ENCODE measurements at regions of chr5 and their contacts with region 1.

Region 1: GRCh38 chr5:154445422-154446182 is at the start of gene SAP30L:
- DNase-seq: peak; percentile 89 to 97 (median 94)
- H3K4me3 ChIP-seq: peak within 1 kb of the TSS; percentile 69 to 99 (median 92)
- H3K27ac ChIP-seq: peak within 1 kb of the TSS in 53 of 59 donors; percentile 13 to 92 (median 72)
- H3K27me3 ChIP-seq: no peaks in the 10 kb centered on the region
- CTCF ChIP-seq: peak in 6 of 56 donors; percentile 2 to 31 (median 16)
- total RNA-seq, gene SAP30L: 22.8 to 74.9 (median 44.4) TPM

Region 2: DNA sequence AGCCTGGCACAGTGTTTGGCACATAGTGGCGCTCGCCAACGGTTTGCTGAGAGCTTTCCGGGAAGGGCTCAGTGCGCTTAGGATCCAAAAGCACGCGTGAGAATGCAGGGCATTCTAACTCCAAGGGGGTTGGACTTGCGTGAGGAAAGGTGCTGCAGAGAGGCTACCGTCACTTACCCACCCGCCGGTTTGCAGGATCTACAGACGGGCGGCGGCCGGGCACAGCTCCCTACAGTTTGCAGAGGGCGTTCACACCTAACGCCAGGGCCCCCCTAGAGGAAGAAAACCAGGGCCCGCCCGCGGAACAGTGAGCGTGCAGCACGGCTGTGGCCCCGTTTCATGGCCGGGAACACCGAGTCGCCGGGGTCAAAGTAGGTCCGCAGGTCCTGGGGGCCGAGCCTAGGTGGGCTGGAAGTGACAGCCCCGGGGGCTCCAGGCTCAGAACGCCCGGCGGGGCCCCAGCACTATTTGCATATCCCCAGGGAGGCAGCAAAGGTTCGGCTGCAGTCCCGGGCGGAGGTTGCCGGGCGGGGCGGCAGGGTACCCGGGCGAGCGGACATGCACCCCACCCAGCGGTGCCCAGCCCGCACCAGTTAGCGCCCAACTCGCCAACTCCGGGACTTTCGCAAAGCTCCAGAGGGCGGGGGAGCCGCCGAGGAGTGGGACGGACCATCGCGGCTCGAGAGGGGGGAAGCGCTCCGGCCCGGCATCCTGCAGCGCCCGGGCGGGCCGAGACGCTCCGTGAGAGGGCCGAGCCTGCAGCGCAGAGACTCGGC is 255.6 kb before region 1 on chr5:
- intact Hi-C with region 1: loop called in 1 of 2 experiments (anchors 5 kb)
- DNase-seq: peak; percentile 62 to 86 (median 80)
- H3K4me3 ChIP-seq: peak overlapping the region; percentile 53 to 98 (median 89)
- H3K27ac ChIP-seq: peak overlapping the region in 47 of 59 donors; percentile 4 to 89 (median 67)
- H3K27me3 ChIP-seq: no peaks in the 10 kb centered on the region
- CTCF ChIP-seq: peak in 50 of 56 donors; percentile 0 to 67 (median 43)